WTC11 (cell line): ENCODE measurements at regions of chr16 and their contacts with region 1.

Region 1: DNA sequence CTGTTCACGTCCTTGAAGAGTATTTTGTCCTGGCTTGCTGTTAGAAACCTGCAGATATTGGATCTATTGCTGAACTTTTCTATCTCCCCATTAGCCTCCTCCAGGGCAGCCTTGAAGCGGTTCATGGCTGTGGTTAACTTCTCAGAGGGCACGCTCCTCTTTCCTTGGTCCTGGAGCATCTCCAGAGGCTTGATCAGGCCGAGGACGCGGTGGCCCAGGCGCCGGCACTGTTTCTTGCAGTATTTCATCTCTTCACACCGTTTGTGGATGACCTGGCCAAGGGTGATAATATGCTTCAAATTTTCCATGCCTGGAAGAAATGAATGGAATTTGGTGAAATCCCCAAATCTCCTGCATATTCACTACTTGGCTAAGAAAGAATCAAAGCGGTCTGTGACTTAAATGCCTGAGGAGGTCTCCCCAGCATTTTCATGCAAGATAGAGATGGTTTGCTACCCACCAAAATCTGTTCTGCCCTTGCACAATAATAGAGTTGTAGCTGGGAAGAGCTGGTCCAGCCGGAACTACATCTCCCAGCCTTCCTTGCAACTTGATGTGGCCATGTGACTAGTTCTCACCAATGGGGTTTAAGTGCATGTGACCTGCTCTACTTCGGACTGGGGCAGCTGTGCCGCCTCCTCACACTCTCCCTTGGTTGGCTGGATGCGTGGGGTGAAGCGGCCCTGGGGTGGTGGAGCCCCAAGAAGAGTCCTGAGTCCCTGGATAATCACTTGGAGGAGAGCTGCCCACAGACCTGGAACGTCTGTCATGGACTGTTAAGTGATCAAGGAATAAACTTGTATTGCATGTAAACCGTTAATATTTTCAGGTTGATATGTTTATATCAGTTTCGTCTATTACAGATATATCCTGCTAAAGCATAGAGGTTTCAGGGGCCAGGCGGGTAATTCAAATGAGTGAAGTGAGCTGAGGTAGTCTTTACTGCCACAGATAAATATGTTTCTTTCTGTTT is 4.9 kb downstream of the MLKL start:
- DNase-seq: peak; percentile 72
- ATAC-seq: peak; percentile 95
- H3K4me3 Mint-ChIP-seq: peak overlapping the region; percentile 76
- H3K27ac Mint-ChIP-seq: no peak overlapping the region
- H3K4me1 Mint-ChIP-seq: peaks cover 13% of the 10 kb centered on the region
- H3K27me3 Mint-ChIP-seq: peaks cover 23% of the 10 kb centered on the region
- CTCF ChIP-seq: no peak

Region 2: GRCh38 chr16:74657870-74658642 is 37.7 kb before region 1 on chr16:
- CTCF ChIA-PET with region 1: no interaction called
- POLR2A ChIA-PET with region 1: no interaction called
- DNase-seq: no peak
- ATAC-seq: no peak
- H3K4me3 Mint-ChIP-seq: no peak overlapping the region
- H3K27ac Mint-ChIP-seq: no peak overlapping the region
- H3K4me1 Mint-ChIP-seq: 0 out of 2 replicates have a peak, but pooled peaks cover 2% of the 10 kb centered on the region
- H3K27me3 Mint-ChIP-seq: no peaks in the 10 kb centered on the region
- CTCF ChIP-seq: no peak

Region 3: GRCh38 chr16:74677868-74678267 is 17.9 kb before region 1 on chr16:
- CTCF ChIA-PET with region 1: no interaction called
- POLR2A ChIA-PET with region 1: no interaction called
- DNase-seq: peak; percentile 19
- ATAC-seq: peak; percentile 81
- H3K4me3 Mint-ChIP-seq: no peak overlapping the region
- H3K27ac Mint-ChIP-seq: 0 out of 2 replicates have a peak overlapping the region, but pooled peaks have one; percentile 23
- H3K4me1 Mint-ChIP-seq: peaks cover 7% of the 10 kb centered on the region
- H3K27me3 Mint-ChIP-seq: no peaks in the 10 kb centered on the region
- CTCF ChIP-seq: no peak

Region 4: GRCh38 chr16:74716355-74716754 is 20.6 kb after region 1 on chr16:
- CTCF ChIA-PET with region 1: interaction called, 12 read pairs
- POLR2A ChIA-PET with region 1: no interaction called
- DNase-seq: peak; percentile 44
- ATAC-seq: peak; percentile 47
- H3K4me3 Mint-ChIP-seq: no peak overlapping the region
- H3K27ac Mint-ChIP-seq: no peak overlapping the region
- H3K4me1 Mint-ChIP-seq: no peaks in the 10 kb centered on the region
- H3K27me3 Mint-ChIP-seq: no peaks in the 10 kb centered on the region
- CTCF ChIP-seq: no peak